Activated T-helper 2 cell treated with anti-CD3 and anti-CD28 coated beads, Interferon-gamma antibody, Interleukin-2, Interleukin-4, amounts not matched to agents 10 μg/mL and 5 μg/mL and 100 μg/mL, durations not matched to agents 14 hours and 24 hours and 36 hours (primary cell): ENCODE measurements at regions of chr1 and their contacts with region 1.

Region 1: DNA sequence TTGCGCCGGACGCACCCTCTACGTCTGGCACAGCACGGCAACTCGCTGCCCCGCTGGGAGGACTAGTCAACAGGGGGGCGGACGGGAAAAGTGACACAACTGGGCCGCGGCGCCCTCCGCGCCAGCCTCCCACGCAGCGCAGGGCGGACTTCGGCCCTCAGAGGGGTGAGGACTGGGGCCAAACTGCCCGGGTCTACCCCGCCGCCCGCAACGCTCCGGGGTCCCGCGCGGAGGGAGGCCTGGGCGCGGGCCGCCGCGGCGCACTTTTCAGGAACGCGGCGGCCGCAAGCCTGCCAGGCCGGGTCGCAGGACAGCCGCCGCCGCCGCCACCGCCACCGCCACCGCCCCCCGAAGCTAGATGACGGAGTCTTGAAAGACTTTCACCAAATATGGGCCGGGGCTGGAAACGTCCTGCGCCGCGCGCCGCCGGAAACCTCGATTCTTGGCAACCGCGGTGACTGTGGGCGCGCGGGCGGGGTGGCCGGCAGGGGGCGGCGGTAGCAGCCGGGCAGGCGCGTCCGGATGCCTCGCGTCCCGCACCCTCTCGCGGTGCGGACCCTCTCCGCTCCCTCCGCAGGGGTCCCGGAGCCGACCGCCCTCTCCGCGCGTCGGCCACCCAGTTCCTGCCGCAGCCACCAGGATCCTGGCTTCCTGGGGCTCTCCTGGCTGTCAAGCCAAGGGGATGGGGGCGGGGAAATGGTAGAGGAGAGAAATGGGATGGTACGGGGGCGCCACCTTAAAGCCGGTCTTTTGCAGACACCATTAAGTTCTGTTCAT is 3.7 kb upstream of the CCN1 start:
- DNase-seq: peak; percentile 45
- H3K4me3 Mint-ChIP-seq: peak overlapping the region; percentile 68
- H3K27ac Mint-ChIP-seq: no peak overlapping the region
- H3K4me1 Mint-ChIP-seq: peaks cover 25% of the 10 kb centered on the region
- H3K27me3 Mint-ChIP-seq: peaks cover 69% of the 10 kb centered on the region

Region 2: DNA sequence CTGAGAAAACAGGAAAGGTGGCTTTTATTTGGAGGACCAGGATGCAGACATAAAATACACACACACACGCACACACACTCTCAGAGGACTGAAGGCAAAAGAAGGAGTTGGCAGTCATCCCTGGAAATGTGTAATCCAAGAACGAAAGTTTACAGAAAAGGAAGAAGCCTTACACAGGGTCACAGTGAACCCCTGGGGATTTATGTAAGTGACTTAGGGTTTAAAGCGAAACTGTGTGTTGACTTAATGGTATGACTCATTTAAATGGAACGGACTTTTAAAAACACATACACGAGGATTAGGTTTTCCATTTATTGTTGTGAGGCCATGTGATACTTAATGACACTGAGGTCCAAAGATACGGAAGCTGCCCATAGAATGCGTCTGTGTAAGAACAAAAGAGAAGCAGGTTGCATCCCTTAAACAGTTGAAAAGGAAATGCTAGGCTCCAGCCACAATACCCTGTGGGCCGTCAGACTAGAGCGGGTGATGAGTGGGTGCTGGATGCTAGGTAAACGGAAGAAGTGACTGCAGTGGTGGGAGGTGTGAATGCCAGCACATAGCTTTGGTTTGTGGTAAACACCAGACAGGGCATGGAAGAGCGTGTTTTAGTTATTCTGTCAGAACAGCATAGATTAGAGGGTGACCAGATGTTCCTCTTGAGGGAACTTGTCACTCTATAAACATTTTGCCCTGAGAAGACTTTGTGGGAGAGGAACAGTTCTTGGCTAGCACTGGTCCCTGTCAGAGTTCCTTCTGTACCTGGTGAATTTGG is 278.8 kb before region 1 on chr1:
- intact Hi-C with region 1: loop called (anchors 5 kb)
- DNase-seq: peak; percentile 28
- H3K4me3 Mint-ChIP-seq: peak overlapping the region; percentile 49
- H3K27ac Mint-ChIP-seq: peak overlapping the region; percentile 81
- H3K4me1 Mint-ChIP-seq: peaks cover 24% of the 10 kb centered on the region
- H3K27me3 Mint-ChIP-seq: peaks cover 64% of the 10 kb centered on the region

Region 3: GRCh38 chr1:85464497-85465098 is 112.2 kb before region 1 on chr1:
- intact Hi-C with region 1: loop called (anchors 5 kb)
- DNase-seq: peak; percentile 10
- H3K4me3 Mint-ChIP-seq: peak overlapping the region; percentile 19
- H3K27ac Mint-ChIP-seq: no peak overlapping the region
- H3K4me1 Mint-ChIP-seq: peaks cover 4% of the 10 kb centered on the region
- H3K27me3 Mint-ChIP-seq: peaks cover 55% of the 10 kb centered on the region

Region 4: DNA sequence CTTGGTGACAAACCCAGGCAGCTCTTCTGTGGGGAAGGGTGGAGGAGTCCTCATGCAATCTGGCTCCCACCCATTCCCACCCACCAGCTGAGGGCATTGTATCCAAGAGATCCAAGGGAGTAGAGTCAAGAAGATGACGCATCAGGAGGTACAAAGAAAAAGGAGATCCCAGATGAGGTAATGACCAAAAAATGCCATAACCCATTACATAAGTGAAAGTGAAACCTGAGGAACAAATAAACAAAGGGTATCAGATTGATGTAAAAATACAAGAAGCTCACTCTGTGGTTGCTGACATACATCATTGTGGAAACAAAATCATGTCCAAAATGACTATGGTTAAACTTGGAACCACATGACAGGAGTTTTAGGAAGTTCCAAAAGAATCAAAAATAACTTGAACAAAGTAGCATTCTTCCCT is 46.2 kb after region 1 on chr1:
- intact Hi-C with region 1: loop called (anchors 5 kb)
- DNase-seq: no peak
- H3K4me3 Mint-ChIP-seq: no peak overlapping the region
- H3K27ac Mint-ChIP-seq: no peak overlapping the region
- H3K4me1 Mint-ChIP-seq: peaks cover 7% of the 10 kb centered on the region
- H3K27me3 Mint-ChIP-seq: no peaks in the 10 kb centered on the region

Region 5: GRCh38 chr1:85707990-85708828 is 131.4 kb after region 1 on chr1 and contains the start of gene ZNHIT6:
- intact Hi-C with region 1: loop called (anchors 5 kb)
- DNase-seq: peak; percentile 84
- H3K4me3 Mint-ChIP-seq: no peak within 1 kb of the TSS
- H3K27ac Mint-ChIP-seq: no peak within 1 kb of the TSS
- H3K4me1 Mint-ChIP-seq: peaks cover 20% of the 10 kb centered on the region
- H3K27me3 Mint-ChIP-seq: peaks cover 1% of the 10 kb centered on the region
- total RNA-seq, gene ZNHIT6: 19.9 and 21.8 TPM in 2 replicates